ENCODE measurements at regions of chr4 and their contacts with region 1.

Region 1: GRCh38 chr4:155953151-155954114 is at the start of gene CTSO:
- DNase-seq: peak; percentile 82
- ATAC-seq: peak; percentile 91
- H3K4me3 ChIP-seq: peak within 1 kb of the TSS; percentile 89
- H3K27ac ChIP-seq: peak within 1 kb of the TSS; percentile 93
- H3K4me1 ChIP-seq: peaks cover 11% of the 10 kb centered on the region
- H3K27me3 ChIP-seq: no peaks in the 10 kb centered on the region
- CTCF ChIP-seq: peak; percentile 73
- total RNA-seq, gene CTSO: 1.6 and 2.8 TPM in 2 replicates

Region 2: DNA sequence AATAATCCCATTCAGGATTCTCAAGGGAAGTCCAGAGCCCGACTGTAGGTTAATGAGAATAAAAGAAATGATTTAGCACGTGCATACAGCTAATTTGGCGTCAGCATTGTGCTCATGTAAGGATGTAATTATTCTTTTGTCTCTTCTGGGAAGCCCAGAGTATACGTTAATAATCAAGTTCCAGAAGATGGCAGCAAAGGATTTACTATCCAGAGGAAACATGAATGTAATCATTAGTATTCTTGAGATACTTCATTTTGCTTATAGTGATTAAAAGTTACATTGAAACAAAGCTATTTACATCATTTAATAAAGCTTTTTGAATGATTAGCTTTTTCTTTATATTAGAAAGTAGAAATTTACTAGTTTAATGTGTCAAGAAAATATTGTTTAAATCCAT is 549.5 kb before region 1 on chr4:
- CTCF ChIA-PET with region 1: no interaction called
- POLR2A ChIA-PET with region 1: no interaction called
- intact Hi-C with region 1: loop called (anchors 1 kb)
- DNase-seq: peak; percentile 71
- ATAC-seq: peak; percentile 73
- H3K4me3 ChIP-seq: no peak overlapping the region
- H3K27ac ChIP-seq: no peak overlapping the region
- H3K4me1 ChIP-seq: peaks cover 7% of the 10 kb centered on the region
- H3K27me3 ChIP-seq: no peaks in the 10 kb centered on the region
- CTCF ChIP-seq: peak; percentile 68

Region 3: GRCh38 chr4:155809835-155810234 is 143.6 kb before region 1 on chr4:
- CTCF ChIA-PET with region 1: interaction called, 21 read pairs
- POLR2A ChIA-PET with region 1: no interaction called
- intact Hi-C with region 1: loop called (anchors 1 kb)
- DNase-seq: peak; percentile 87
- ATAC-seq: peak; percentile 54
- H3K4me3 ChIP-seq: no peak overlapping the region
- H3K27ac ChIP-seq: no peak overlapping the region
- H3K4me1 ChIP-seq: peaks cover 10% of the 10 kb centered on the region
- H3K27me3 ChIP-seq: no peaks in the 10 kb centered on the region
- CTCF ChIP-seq: peak; percentile 67

Region 4: GRCh38 chr4:155822572-155822971 is 130.9 kb before region 1 on chr4:
- CTCF ChIA-PET with region 1: interaction called, 4 read pairs
- POLR2A ChIA-PET with region 1: no interaction called
- intact Hi-C with region 1: loop called (anchors 1 kb)
- DNase-seq: peak; percentile 83
- ATAC-seq: peak; percentile 98
- H3K4me3 ChIP-seq: no peak overlapping the region
- H3K27ac ChIP-seq: peak overlapping the region; percentile 89
- H3K4me1 ChIP-seq: peaks cover 28% of the 10 kb centered on the region
- H3K27me3 ChIP-seq: no peaks in the 10 kb centered on the region
- CTCF ChIP-seq: no peak

Region 5: DNA sequence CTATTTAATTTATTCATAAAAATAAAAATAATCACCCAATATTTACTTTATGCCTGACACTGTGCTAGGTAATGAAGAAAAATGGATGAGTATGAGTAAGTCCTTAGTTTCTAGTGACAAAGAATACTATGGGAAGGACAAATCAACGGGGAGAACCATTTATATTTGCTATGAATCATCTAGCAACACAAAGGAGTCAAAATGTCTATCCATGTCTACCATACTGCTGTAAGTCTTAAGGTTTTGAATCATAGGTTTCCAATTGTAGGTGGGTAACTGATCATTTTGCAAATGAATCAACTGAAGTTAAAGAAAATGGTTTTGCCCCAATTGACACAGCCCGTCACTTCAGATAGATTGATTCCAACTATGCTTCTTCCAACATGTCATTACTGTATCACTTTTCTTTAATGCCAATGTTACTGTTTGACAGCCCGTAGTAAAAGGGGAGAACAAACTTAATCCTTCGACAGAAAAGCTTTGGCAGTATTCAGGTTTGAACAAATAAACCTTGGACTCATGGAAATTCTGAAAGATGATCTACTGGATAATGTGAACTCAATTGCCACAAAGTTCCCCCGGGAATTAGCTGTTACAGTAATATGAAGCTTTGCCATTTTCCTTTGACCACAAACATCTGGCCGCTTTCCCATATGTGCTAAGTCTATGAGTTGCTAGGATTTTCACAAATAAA is 46.7 kb before region 1 on chr4:
- CTCF ChIA-PET with region 1: interaction called, 4 read pairs
- POLR2A ChIA-PET with region 1: interaction called, 6 read pairs
- intact Hi-C with region 1: loop called (anchors 2 kb)
- DNase-seq: peak; percentile 92
- ATAC-seq: peak; percentile 87
- H3K4me3 ChIP-seq: peak overlapping the region; percentile 48
- H3K27ac ChIP-seq: peak overlapping the region; percentile 98
- H3K4me1 ChIP-seq: peaks cover 22% of the 10 kb centered on the region
- H3K27me3 ChIP-seq: no peaks in the 10 kb centered on the region
- CTCF ChIP-seq: no peak

Region 6: GRCh38 chr4:156073976-156074375 is 120.5 kb after region 1 on chr4:
- CTCF ChIA-PET with region 1: no interaction called
- POLR2A ChIA-PET with region 1: no interaction called
- intact Hi-C with region 1: no loop called
- DNase-seq: no peak
- ATAC-seq: no peak
- H3K4me3 ChIP-seq: no peak overlapping the region
- H3K27ac ChIP-seq: no peak overlapping the region
- H3K4me1 ChIP-seq: no peaks in the 10 kb centered on the region
- H3K27me3 ChIP-seq: no peaks in the 10 kb centered on the region
- CTCF ChIP-seq: no peak

Region 7: DNA sequence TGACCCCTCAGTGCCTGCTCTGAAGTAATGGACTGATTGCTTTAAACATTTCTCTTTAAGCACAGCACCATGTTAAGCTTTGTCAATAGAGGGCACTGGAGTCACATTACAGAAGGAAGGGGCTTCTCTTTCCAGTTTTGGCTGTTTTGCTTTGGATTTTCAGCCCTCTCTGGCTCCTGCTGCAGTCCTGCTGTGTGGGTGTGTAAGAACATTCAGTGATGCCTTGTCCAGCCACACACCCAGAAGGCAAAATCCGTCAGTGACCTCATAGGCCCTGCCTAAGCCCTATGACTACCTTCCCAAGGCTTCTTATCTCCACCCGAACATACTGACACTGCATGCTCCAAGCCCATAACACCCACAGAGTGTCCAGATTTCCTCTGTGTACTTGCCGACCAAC is 215.6 kb after region 1 on chr4:
- CTCF ChIA-PET with region 1: no interaction called
- POLR2A ChIA-PET with region 1: no interaction called
- intact Hi-C with region 1: no loop called
- DNase-seq: peak; percentile 75
- ATAC-seq: peak; percentile 91
- H3K4me3 ChIP-seq: no peak overlapping the region
- H3K27ac ChIP-seq: peak overlapping the region; percentile 30; the same call in 1 of the 2 replicates
- H3K4me1 ChIP-seq: peaks cover 8% of the 10 kb centered on the region; the same call in 1 of the 2 replicates
- H3K27me3 ChIP-seq: no peaks in the 10 kb centered on the region
- CTCF ChIP-seq: peak; percentile 71